IMR-90 (cell line): ENCODE measurements at regions of chr5 and their contacts with region 1.

Region 1: GRCh38 chr5:35856765-35857291 is at the start of gene IL7R:
- DNase-seq: peak; percentile 79
- ATAC-seq: peak; percentile 56
- H3K4me3 ChIP-seq: peak within 1 kb of the TSS; percentile 52; the same call in 1 of the 2 replicates
- H3K27ac ChIP-seq: peak within 1 kb of the TSS; percentile 83
- H3K4me1 ChIP-seq: peaks cover 11% of the 10 kb centered on the region
- H3K27me3 ChIP-seq: no peaks in the 10 kb centered on the region
- CTCF ChIP-seq: no peak
- POLR2A ChIP-seq: 0 out of 2 replicates have a peak, but pooled peaks have one; percentile 29
- RAD21 ChIP-seq: 0 out of 2 replicates have a peak, but pooled peaks have one; percentile 1
- total RNA-seq, gene IL7R: 56.9 and 71.7 TPM in 2 replicates

Region 2: DNA sequence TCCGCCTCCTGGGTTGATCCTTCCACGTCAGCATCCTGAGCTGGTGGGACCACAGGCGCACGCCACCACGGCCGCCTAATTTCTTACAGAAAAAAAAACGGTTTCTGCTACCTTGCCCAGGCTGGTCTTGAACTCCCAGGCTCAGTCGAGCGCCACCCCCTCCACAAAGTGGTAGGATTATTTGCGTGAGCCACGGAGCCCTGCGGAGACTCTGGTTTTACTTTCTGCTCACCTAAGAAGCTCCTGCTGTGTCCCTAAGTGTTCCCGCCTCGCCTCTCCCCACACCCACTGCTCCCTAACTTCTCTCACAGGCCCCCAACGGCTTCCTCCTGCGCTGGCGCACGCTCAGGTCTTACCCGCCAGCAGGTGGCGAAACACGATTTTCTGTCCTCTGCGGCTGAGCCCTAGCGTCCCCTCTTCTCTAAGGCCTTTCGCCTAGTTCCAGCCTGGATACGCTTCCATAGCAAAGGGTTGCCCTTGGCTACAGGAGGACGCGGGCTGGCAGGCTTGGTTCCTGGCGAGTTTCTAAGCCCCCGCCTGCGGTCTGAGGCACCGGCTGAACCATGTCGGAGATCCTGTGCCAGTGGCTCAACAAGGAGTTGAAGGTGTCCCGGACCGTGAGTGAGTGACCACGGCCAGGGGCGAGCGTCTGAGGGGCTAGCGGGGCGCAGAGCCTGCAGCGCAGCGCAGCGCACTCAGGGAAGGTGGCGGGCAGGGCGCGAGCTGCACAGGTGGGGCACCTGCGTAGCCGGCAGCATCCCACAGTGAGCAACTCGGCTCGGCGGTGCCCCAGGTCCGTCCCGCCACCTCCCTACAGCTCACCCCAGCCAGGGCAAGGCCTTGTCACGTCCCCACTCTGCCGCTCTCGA is 239.2 kb before region 1 on chr5 and contains the start of gene SPEF2:
- CTCF ChIA-PET with region 1: no interaction called
- POLR2A ChIA-PET with region 1: no interaction called
- dilution Hi-C with region 1: no loop called
- in situ Hi-C with region 1: no loop called
- intact Hi-C with region 1: loop called (anchors 2 kb)
- DNase-seq: peak; percentile 91
- ATAC-seq: peak; percentile 100
- H3K4me3 ChIP-seq: peak within 1 kb of the TSS; percentile 78
- H3K27ac ChIP-seq: peak within 1 kb of the TSS; percentile 35
- H3K4me1 ChIP-seq: peaks cover 3% of the 10 kb centered on the region; the same call in 1 of the 2 replicates
- H3K27me3 ChIP-seq: no peaks in the 10 kb centered on the region
- CTCF ChIP-seq: peak; percentile 89
- POLR2A ChIP-seq: no peak
- RAD21 ChIP-seq: peak; percentile 72
- total RNA-seq, gene SPEF2: 2.3 and 2.5 TPM in 2 replicates

Region 3: DNA sequence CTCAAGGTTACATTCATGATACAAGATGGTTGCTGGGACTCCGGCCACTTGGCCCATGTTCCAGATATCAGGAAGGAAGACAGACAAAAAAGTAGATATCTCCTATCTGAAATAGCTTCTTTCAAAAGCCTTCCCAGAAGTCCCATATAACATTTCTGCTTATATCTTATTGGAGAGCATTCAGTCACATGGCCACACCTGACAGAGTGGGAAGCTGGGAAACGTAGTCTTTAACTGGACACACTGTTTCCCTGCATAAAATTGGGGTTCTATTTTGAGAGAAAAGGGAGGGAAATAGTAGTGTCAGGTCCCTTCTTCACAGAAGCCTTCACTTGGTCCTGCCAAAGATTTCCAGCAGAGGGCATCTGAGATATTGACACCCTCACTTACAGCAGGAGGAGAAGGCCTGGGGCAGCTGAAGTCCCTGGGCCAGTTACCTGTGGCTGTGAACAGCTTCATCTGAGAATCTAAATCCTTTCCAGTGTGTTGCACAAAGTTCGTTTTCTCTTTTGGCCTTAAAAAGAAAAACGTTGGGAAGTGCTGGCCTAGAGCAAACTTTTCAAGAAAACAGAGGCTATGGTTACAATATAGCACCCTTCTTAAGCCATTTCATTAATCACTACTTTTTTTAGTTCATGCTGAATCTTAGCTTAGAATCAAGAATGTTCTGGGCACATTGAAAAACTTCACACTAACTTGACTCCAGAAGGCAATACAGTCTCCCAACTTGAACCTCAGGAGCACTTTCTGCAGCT is 205.6 kb before region 1 on chr5:
- CTCF ChIA-PET with region 1: interaction called, 5 read pairs
- POLR2A ChIA-PET with region 1: interaction called, 5 read pairs
- dilution Hi-C with region 1: no loop called
- in situ Hi-C with region 1: no loop called
- intact Hi-C with region 1: loop called (anchors 5 kb)
- DNase-seq: peak; percentile 57
- ATAC-seq: peak; percentile 92
- H3K4me3 ChIP-seq: no peak overlapping the region
- H3K27ac ChIP-seq: no peak overlapping the region
- H3K4me1 ChIP-seq: peaks cover 2% of the 10 kb centered on the region; the same call in 1 of the 2 replicates
- H3K27me3 ChIP-seq: no peaks in the 10 kb centered on the region
- CTCF ChIP-seq: peak; percentile 63
- POLR2A ChIP-seq: no peak
- RAD21 ChIP-seq: peak; percentile 73

Region 4: DNA sequence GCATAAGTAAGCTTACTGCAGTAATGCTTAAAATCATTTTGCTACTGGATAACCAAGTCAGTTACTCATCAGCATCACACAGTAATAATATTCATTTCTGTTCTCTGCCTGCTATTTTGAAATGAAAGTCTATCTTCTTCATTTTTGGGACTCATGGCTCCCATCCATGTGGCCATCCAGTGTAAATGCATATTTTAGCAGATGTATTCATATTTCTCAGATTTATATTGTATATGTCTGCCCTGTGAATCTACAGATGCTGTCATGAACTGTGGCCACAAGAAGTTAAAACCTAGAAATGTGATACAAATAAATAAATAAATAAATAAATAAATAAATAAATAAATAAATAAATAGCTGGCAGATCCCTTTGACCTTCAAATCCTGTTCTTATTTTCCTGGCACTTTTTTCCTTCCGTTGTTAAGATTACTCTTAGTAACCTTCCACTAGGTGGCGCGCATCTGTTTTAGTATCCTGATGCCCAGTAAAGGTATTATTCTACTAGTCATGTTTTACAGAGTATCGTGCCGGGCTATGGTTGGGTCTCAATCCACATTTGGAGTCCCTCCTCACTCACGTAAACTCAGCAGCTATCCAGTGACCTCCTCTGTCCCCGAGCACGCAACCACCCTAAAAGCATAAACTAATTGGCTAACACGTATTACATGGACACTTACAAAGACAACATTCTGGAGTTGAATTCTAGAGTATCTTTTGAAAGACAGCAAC is 79.3 kb before region 1 on chr5:
- CTCF ChIA-PET with region 1: interaction called, 8 read pairs
- POLR2A ChIA-PET with region 1: interaction called, 3 read pairs
- dilution Hi-C with region 1: no loop called
- in situ Hi-C with region 1: no loop called
- intact Hi-C with region 1: loop called (anchors 2 kb)
- DNase-seq: peak; percentile 83
- ATAC-seq: peak; percentile 35
- H3K4me3 ChIP-seq: no peak overlapping the region
- H3K27ac ChIP-seq: peak overlapping the region; percentile 10; the same call in 1 of the 2 replicates
- H3K4me1 ChIP-seq: peaks cover 14% of the 10 kb centered on the region
- H3K27me3 ChIP-seq: no peaks in the 10 kb centered on the region
- CTCF ChIP-seq: peak; percentile 54
- POLR2A ChIP-seq: no peak
- RAD21 ChIP-seq: peak; percentile 54; the same call in 1 of the 2 replicates

Region 5: DNA sequence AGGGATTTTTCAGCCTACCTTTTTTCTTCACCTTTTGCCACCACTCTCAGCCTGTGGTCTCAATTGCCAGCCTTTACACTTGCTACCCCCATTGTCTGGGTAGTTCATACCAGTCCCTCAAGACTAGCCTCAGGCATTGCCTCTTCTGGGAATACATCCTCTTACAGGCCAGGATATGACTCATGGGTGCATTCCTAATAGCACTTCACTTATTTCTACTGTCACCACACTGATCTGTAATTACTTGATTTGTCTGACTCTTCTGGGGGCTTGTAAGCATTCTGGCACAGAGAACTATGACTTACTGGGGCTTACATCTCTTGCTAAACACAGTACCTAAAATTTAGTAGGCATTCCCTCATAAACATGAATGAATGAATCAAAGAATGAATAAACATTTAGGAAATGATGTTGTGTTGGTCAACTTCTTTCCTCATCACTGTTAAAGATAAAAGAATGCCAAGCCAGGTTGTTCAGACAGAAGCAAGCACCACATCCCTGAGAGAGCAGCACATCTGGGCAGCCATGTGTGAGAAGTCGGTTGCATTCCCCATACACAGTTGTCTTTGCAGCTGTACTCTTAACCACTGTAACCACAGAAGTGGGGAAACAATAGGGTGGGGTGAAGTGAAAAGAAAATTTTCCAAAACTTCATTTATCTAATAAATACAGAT is 27.4 kb after region 1 on chr5:
- CTCF ChIA-PET with region 1: no interaction called
- POLR2A ChIA-PET with region 1: no interaction called
- dilution Hi-C with region 1: no loop called
- in situ Hi-C with region 1: no loop called
- intact Hi-C with region 1: loop called (anchors 2 kb)
- DNase-seq: peak; percentile 90
- ATAC-seq: peak; percentile 93
- H3K4me3 ChIP-seq: no peak overlapping the region
- H3K27ac ChIP-seq: peak overlapping the region; percentile 59
- H3K4me1 ChIP-seq: peaks cover 6% of the 10 kb centered on the region; the same call in 1 of the 2 replicates
- H3K27me3 ChIP-seq: no peaks in the 10 kb centered on the region
- CTCF ChIP-seq: no peak
- POLR2A ChIP-seq: no peak
- RAD21 ChIP-seq: no peak

Region 6: DNA sequence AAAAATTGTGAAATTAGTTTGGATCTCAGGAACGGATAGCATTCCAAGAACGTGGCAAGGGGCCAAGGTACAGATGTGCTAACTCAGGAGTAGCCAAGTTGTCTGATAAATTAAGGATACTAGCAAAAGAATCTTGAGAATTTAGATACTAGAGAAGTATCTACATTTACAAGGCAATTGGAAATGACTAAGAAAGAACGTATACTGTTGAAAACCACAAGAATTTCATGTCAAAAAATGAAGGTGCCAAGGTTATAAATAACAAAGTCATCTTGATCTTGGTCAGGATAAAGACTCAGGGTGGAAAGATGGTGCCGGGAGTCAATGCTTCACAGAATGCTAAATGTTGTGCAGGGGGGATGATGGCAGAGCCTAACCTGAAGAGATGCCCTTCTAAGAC is 62.4 kb after region 1 on chr5:
- CTCF ChIA-PET with region 1: no interaction called
- POLR2A ChIA-PET with region 1: no interaction called
- dilution Hi-C with region 1: no loop called
- in situ Hi-C with region 1: no loop called
- intact Hi-C with region 1: loop called (anchors 2 kb)
- DNase-seq: peak; percentile 95
- ATAC-seq: peak; percentile 78
- H3K4me3 ChIP-seq: no peak overlapping the region
- H3K27ac ChIP-seq: peak overlapping the region; percentile 53
- H3K4me1 ChIP-seq: peaks cover 6% of the 10 kb centered on the region
- H3K27me3 ChIP-seq: no peaks in the 10 kb centered on the region
- CTCF ChIP-seq: no peak
- POLR2A ChIP-seq: no peak
- RAD21 ChIP-seq: no peak

Region 7: DNA sequence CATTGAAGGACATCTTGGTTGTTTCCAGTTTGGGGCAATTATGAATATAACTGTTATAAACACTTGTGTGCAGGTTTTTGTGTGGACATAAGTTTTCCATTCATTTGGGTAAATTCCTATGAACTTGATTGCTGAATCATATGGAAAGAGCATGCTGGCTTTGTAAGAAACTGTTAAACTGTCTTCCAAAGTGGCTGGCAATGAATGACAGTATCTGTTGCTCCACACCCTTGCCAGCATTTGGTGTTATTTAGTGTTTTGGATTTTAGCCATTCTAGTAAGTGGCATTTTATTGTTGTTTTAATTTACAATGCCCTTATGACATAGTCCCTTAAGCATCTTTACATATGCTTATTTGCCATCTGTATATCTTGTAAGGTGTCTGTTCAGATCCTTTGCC is 239.7 kb after region 1 on chr5:
- CTCF ChIA-PET with region 1: no interaction called
- POLR2A ChIA-PET with region 1: no interaction called
- dilution Hi-C with region 1: no loop called
- in situ Hi-C with region 1: no loop called
- intact Hi-C with region 1: no loop called
- DNase-seq: no peak
- ATAC-seq: no peak
- H3K4me3 ChIP-seq: no peak overlapping the region
- H3K27ac ChIP-seq: no peak overlapping the region
- H3K4me1 ChIP-seq: no peaks in the 10 kb centered on the region
- H3K27me3 ChIP-seq: no peaks in the 10 kb centered on the region
- CTCF ChIP-seq: no peak
- POLR2A ChIP-seq: no peak
- RAD21 ChIP-seq: no peak